ENCODE measurements at regions of chr16 and their contacts with region 1.

Region 1: DNA sequence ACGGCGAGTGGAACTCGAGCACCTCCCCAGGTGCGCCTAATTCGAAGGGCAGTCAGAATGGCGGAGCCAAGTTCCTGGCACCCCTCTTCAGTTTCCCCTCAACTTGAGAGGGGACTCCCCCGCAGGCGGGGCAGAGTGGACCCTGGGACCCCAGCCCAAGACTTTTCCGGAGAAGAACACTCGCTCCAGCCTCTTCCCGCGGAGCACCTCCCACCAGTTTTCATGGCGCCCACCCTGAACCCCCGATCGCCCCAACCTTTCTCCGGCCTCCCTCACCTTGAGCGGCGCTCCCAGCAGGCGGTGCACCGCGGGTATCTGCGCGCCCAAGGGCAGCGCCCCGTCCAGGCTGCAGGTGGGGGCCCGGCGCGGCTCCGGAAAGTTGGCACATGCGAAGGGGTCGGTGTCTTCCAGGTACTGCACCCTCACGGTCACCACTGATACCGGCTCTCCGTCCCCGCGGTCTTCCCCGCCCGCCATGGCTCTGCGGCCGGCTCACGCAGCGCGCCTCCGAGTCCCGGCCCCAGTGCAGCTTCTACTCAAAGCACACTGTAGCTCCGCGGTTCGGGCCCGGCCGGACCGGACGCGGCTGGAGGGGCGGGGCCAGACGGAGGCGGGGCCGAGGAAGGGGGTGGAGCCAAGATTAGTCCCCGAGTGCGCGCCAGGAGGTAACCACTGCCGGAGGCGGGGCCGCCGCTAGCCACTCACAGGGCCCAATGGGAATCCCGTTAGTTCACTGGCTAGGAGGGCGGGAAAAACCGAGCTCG is at the start of gene FHOD1:
- DNase-seq: peak; percentile 99
- ATAC-seq: peak; percentile 74
- H3K4me3 Mint-ChIP-seq: peak within 1 kb of the TSS; percentile 87
- H3K27ac Mint-ChIP-seq: peak within 1 kb of the TSS; percentile 85
- H3K4me1 Mint-ChIP-seq: peaks cover 52% of the 10 kb centered on the region
- H3K27me3 Mint-ChIP-seq: peaks cover 11% of the 10 kb centered on the region
- total RNA-seq, gene FHOD1: 75.5 to 77.2 TPM

Region 2: DNA sequence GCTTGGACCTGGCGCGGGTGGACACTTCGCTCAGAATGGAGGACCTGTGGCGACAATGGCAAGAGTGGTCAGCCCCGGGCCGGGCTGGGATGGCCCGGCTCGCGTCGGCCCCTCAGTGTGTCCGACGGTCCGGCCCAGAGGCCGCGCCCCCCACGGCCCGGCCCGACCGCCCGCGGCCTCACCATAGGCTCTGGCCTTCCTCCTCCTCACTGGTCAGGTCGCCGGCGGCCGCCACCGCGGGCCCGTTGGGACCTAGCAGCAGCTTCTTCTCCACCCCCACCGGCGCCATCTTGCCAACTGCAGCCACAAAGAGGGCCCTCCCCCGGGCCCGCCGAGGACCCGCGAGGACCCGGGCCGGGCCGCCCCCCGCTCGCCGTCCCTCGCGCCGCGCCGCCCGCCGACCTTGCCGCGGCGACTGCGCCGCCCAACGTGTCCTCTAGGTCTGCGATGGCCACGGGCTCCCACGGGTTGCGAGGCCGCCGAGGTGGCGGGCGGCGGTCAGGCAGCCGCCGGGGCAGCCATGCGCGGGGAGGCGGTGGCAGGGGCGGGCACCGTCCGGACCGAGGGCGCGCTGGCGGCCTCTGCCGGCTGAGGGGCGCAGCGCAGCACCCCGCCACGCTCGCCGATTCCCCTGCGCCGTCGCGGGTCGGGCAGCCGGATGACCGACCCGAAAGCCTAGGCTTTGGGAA is 495.7 kb before region 1 on chr16 and contains the start of gene DYNC1LI2:
- CTCF ChIA-PET with region 1: no interaction called
- POLR2A ChIA-PET with region 1: no interaction called
- intact Hi-C with region 1: loop called in 1 of 2 experiments (anchors 10 kb)
- DNase-seq: peak; percentile 89
- ATAC-seq: peak; percentile 93
- H3K4me3 Mint-ChIP-seq: peak within 1 kb of the TSS; percentile 81
- H3K27ac Mint-ChIP-seq: peak within 1 kb of the TSS; percentile 80
- H3K4me1 Mint-ChIP-seq: peaks cover 38% of the 10 kb centered on the region
- H3K27me3 Mint-ChIP-seq: peaks cover 9% of the 10 kb centered on the region
- total RNA-seq, gene DYNC1LI2: 32.3 to 35.7 TPM

Region 3: GRCh38 chr16:67050796-67051195 is 196.3 kb before region 1 on chr16:
- CTCF ChIA-PET with region 1: no interaction called
- POLR2A ChIA-PET with region 1: no interaction called
- intact Hi-C with region 1: no loop called
- DNase-seq: no peak
- ATAC-seq: no peak
- H3K4me3 Mint-ChIP-seq: no peak overlapping the region
- H3K27ac Mint-ChIP-seq: no peak overlapping the region
- H3K4me1 Mint-ChIP-seq: peaks cover 37% of the 10 kb centered on the region
- H3K27me3 Mint-ChIP-seq: no peaks in the 10 kb centered on the region

Region 4: GRCh38 chr16:67183627-67184328 is 63.3 kb before region 1 on chr16 and contains the start of gene MATCAP1:
- CTCF ChIA-PET with region 1: interaction called, 4 read pairs
- POLR2A ChIA-PET with region 1: no interaction called
- intact Hi-C with region 1: loop called in 1 of 2 experiments (anchors 1 kb)
- DNase-seq: peak; percentile 96
- ATAC-seq: peak; percentile 97
- H3K4me3 Mint-ChIP-seq: no peak within 1 kb of the TSS
- H3K27ac Mint-ChIP-seq: no peak within 1 kb of the TSS
- H3K4me1 Mint-ChIP-seq: peaks cover 15% of the 10 kb centered on the region
- H3K27me3 Mint-ChIP-seq: peaks cover 9% of the 10 kb centered on the region
- total RNA-seq, gene MATCAP1: 28.8 to 30.4 TPM

Region 5: DNA sequence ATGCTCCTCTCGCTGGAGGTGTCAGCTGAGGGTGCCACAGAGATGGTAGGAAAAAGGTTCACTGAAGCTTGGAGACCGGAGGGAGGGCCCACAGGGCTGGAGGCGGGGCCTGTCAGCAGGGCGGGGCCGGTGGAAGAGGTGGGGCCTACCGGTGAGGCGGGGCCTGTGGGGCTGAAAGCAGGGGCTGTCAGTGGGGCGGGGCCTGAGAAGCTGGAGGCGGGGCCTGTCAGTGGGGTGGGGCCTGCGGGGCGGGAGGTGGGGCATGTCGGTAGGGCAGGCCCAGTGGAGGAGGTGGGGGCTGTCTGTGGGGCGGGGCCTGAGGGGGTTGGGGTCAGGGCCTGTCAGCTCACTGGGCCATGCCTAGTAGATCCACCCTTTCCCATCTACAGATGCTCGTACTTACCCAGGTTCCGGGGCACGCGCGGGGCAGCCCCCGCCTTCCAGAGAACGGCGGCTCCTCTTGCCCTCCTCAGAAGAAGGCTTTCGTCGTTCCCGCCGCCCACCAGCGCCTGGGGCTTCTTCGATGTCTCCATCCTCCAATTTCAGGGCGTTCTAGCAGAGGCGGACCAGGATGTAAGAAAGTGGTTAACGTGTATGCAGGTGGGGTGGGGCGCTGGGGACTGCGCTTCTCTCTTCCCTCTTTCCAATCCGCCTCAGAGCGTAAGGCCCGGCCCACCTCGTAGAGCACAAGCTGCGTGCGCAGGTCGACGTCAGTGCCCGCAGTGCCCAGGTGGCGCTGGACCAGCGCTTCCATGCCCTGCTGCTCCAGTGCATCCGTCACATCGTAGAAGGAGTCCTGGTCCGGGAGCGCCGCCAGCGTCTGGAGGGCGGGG is 10.3 kb before region 1 on chr16:
- CTCF ChIA-PET with region 1: interaction called, 4 read pairs
- POLR2A ChIA-PET with region 1: interaction called, 6 read pairs
- intact Hi-C with region 1: loop called (anchors 1 kb)
- DNase-seq: peak; percentile 94
- ATAC-seq: peak; percentile 99
- H3K4me3 Mint-ChIP-seq: peak overlapping the region; percentile 66
- H3K27ac Mint-ChIP-seq: peak overlapping the region; percentile 78
- H3K4me1 Mint-ChIP-seq: peaks cover 12% of the 10 kb centered on the region
- H3K27me3 Mint-ChIP-seq: no peaks in the 10 kb centered on the region

Region 6: DNA sequence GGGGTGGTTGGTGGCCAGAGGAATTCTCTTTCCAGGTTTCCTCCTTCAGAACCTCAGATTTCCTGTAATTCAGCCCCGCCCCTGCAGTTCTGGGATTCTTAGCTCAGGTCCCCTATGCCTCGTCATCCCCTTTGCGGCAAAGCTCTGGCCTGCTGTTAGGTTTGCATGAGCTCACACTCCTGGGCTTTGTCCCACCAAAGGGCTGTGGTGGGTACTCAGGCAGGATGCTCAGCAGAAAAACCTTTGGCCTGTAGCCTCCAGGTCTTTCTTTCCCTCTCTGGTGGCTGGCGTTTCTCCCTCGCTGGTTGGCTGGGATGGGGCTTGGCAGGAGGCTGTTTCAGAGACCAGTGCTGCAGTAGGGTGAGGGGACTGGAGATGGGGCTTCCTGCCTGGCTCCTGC is 22.6 kb after region 1 on chr16:
- CTCF ChIA-PET with region 1: no interaction called
- POLR2A ChIA-PET with region 1: no interaction called
- intact Hi-C with region 1: no loop called
- DNase-seq: no peak
- ATAC-seq: no peak
- H3K4me3 Mint-ChIP-seq: no peak overlapping the region
- H3K27ac Mint-ChIP-seq: no peak overlapping the region
- H3K4me1 Mint-ChIP-seq: no peaks in the 10 kb centered on the region
- H3K27me3 Mint-ChIP-seq: no peaks in the 10 kb centered on the region

Region 7: GRCh38 chr16:67311607-67312488 is 64.7 kb after region 1 on chr16:
- CTCF ChIA-PET with region 1: no interaction called
- POLR2A ChIA-PET with region 1: interaction called, 4 read pairs
- intact Hi-C with region 1: loop called (anchors 1 kb)
- DNase-seq: peak; percentile 94
- ATAC-seq: peak; percentile 98
- H3K4me3 Mint-ChIP-seq: peak overlapping the region; percentile 1
- H3K27ac Mint-ChIP-seq: peak overlapping the region; percentile 98
- H3K4me1 Mint-ChIP-seq: peaks cover 40% of the 10 kb centered on the region
- H3K27me3 Mint-ChIP-seq: peaks cover 1% of the 10 kb centered on the region

Region 8: DNA sequence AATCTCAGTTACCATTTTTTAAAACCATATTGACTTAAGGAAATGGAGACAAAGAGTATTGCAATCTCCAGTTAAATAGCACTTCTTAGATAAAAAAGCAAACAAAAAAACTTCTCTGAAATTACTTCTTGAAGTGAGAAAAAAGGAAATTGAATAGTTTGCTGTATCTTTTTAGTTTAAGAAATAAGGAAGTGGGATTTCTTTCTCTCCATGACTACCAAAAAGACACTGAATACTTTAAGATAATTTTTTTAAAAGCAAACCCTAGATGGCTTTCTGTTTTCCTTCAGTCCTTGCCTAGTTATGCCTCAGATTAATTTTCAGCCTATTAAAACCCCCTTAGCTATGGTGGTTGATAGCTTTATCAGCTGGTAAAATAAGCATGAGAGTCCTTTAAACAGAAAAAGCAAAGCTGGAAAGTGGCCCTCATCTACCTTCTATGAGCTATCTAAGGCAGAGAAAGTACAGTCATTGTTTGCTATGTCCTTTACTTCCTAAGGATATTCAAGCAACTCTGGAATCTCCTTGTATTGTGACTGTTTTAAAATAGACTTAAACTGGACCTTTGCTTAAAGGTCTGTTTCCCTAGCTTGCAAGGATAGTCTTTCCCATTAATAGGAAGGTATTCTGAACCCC is 117.6 kb after region 1 on chr16:
- CTCF ChIA-PET with region 1: no interaction called
- POLR2A ChIA-PET with region 1: no interaction called
- intact Hi-C with region 1: no loop called
- DNase-seq: no peak
- ATAC-seq: no peak
- H3K4me3 Mint-ChIP-seq: no peak overlapping the region
- H3K27ac Mint-ChIP-seq: no peak overlapping the region
- H3K4me1 Mint-ChIP-seq: peaks cover 8% of the 10 kb centered on the region
- H3K27me3 Mint-ChIP-seq: no peaks in the 10 kb centered on the region